Activated B cell treated with CpG ODN at 0.5 μM for 24 hours (primary cell): ENCODE measurements at regions of chr14 and their contacts with region 1.

Region 1: DNA sequence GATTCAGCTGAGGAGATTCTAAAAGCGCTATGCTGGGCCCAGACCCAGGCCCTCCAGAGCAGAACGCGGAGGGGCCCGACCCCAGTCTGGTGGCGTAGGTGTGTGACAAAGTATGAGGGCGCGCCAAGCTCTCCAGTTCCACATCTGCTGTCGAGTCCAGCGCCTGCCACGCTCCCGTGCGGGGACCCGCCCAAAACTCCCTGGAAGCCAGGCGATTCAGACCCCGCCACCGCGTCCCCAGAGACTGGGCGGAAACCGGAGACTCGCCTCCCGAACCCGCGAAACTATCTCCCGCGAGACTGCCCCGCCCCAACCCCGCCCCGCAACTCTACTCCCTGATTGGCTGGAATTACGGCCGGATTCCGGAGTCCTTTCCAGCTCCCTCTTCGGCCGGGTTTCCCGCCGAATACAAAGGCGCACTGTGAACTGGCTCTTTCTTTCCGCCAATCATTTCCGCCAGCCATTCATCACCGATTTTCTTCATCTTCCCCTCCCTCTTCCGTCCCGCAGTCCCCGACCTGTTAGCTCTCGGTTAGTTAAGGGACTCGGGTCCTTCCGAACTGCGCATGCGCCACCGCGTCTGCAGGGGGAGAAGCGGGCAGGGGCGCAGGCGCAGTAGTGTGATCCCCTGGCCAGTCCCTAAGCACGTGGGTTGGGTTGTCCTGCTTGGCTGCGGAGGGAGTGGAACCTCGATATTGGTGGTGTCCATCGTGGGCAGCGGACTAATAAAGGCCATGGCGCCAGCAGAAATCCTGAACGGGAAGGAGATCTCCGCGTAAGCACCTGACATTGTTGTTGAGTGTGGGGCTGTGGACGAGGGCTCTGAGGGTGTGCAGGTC is at the start of gene MTHFD1:
- DNase-seq: peak; percentile 93
- ATAC-seq: peak; percentile 79
- H3K4me3 Mint-ChIP-seq: peak within 1 kb of the TSS; percentile 94
- H3K27ac Mint-ChIP-seq: peak within 1 kb of the TSS; percentile 94
- H3K4me1 Mint-ChIP-seq: peaks cover 52% of the 10 kb centered on the region
- H3K27me3 Mint-ChIP-seq: no peaks in the 10 kb centered on the region
- CTCF ChIP-seq: no peak
- total RNA-seq, gene MTHFD1: 91.4 and 98.4 TPM in 2 replicates

Region 2: GRCh38 chr14:63632932-63633514 is 754.9 kb before region 1 on chr14:
- CTCF ChIA-PET with region 1: no interaction called
- POLR2A ChIA-PET with region 1: no interaction called
- intact Hi-C with region 1: no loop called
- DNase-seq: no peak
- ATAC-seq: peak; percentile 80
- H3K4me3 Mint-ChIP-seq: no peak overlapping the region
- H3K27ac Mint-ChIP-seq: no peak overlapping the region
- H3K4me1 Mint-ChIP-seq: peaks cover 20% of the 10 kb centered on the region
- H3K27me3 Mint-ChIP-seq: no peaks in the 10 kb centered on the region
- CTCF ChIP-seq: no peak

Region 3: DNA sequence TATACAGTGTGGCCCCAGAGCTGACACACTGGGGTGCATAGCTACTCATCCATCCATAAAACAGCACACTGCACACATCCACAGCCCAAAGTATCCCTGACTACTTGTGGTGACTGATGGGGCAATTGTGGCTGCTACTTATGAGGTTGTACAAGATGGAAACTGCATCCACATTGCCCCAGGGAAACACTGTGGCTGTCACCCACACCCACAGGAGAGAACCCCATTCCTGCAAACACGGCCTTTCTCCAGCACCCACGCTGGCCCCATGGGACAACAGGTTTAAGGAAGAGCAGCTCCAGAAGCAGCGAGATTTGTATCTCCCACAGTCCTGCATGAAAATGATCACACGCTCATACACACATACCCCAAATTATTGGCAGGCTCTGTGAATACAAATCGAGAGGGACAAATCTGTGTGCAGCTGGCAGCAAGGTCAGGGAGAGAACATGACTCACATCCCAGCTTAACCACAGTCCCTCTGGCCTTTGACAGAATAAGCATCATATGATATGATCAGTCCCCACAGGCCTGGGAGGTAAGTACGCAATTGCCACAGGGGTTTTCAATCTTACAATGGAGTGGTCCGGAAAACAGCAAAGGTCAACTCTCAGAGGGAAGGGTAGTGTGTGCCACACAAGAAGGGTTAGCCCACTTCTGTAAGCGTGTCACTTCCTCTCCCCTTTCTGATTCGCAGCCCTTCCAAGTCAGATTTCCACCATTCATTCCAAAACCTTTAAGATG is 155.6 kb before region 1 on chr14:
- CTCF ChIA-PET with region 1: no interaction called
- POLR2A ChIA-PET with region 1: interaction called, 4 read pairs
- intact Hi-C with region 1: loop called (anchors 5 kb)
- DNase-seq: no peak
- ATAC-seq: peak; percentile 11
- H3K4me3 Mint-ChIP-seq: peak overlapping the region; percentile 53
- H3K27ac Mint-ChIP-seq: peak overlapping the region; percentile 97
- H3K4me1 Mint-ChIP-seq: peaks cover 61% of the 10 kb centered on the region
- H3K27me3 Mint-ChIP-seq: no peaks in the 10 kb centered on the region
- CTCF ChIP-seq: no peak

Region 4: DNA sequence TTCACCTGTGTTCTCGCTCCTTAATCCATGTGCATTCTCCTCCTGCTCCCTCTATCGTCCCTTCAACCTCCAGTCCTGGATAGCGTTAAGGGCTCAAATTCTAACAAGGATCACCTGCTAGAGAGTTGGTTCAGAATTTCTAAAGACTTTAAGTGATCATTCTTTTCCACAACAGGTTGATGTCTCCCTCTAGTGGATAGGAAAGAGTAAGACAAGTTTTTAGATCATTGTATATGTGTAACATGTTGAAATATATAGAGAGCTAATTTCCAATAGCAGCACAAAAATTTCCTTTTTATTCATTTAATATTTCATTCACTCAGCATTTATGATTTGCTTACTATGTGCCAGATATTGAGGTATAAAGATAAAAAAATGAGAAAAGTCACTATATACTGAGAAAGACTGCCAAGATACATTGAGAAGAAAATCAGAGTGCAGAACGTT is 84.4 kb before region 1 on chr14:
- CTCF ChIA-PET with region 1: no interaction called
- POLR2A ChIA-PET with region 1: no interaction called
- intact Hi-C with region 1: no loop called
- DNase-seq: no peak
- ATAC-seq: peak; percentile 65
- H3K4me3 Mint-ChIP-seq: no peak overlapping the region
- H3K27ac Mint-ChIP-seq: no peak overlapping the region
- H3K4me1 Mint-ChIP-seq: peaks cover 2% of the 10 kb centered on the region
- H3K27me3 Mint-ChIP-seq: no peaks in the 10 kb centered on the region
- CTCF ChIP-seq: peak; percentile 93

Region 5: DNA sequence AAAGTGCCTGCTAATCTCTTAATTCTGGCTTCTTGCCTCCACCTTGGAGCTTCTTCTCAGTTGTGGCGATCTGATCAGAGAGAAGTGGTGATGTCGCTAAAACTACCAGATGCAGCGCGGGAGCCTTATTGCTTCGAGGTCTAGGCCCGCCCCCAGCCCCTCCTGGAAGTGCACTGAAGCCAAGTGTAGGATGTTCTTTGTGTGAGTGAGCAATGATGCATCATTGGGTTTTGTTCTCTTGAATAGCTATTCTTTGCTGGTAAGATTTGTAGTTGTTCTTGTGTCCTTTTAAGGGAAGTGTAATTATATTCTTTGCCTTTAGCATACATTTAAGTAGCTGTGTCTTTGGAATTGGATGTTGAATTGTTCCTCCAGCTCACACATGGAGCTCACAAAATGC is 36.1 kb after region 1 on chr14:
- CTCF ChIA-PET with region 1: no interaction called
- POLR2A ChIA-PET with region 1: no interaction called
- intact Hi-C with region 1: no loop called
- DNase-seq: no peak
- ATAC-seq: no peak
- H3K4me3 Mint-ChIP-seq: no peak overlapping the region
- H3K27ac Mint-ChIP-seq: no peak overlapping the region
- H3K4me1 Mint-ChIP-seq: no peaks in the 10 kb centered on the region
- H3K27me3 Mint-ChIP-seq: no peaks in the 10 kb centered on the region
- CTCF ChIP-seq: no peak

Region 6: DNA sequence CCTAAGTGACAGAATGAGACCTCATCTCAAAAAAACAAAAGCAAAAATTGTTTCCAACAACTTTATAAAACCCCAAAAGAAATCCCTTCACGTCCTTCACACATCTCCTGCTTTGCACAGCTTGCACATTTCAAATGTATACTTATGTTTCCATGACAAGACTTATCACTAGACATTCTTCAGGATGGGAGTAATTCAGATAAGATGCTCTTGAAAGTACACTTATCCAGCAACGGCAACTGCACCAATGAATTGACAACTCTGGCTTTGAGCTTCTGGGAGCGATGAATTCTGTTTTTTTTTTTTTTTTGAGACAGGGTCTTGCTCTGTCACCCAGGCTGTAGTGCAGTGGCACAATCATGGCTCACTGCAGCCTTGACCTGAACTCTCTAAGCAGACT is 46.6 kb after region 1 on chr14:
- CTCF ChIA-PET with region 1: interaction called, 14 read pairs
- POLR2A ChIA-PET with region 1: interaction called, 3 read pairs
- intact Hi-C with region 1: no loop called
- DNase-seq: no peak
- ATAC-seq: no peak
- H3K4me3 Mint-ChIP-seq: no peak overlapping the region
- H3K27ac Mint-ChIP-seq: no peak overlapping the region
- H3K4me1 Mint-ChIP-seq: no peaks in the 10 kb centered on the region
- H3K27me3 Mint-ChIP-seq: no peaks in the 10 kb centered on the region
- CTCF ChIP-seq: no peak

Region 7: DNA sequence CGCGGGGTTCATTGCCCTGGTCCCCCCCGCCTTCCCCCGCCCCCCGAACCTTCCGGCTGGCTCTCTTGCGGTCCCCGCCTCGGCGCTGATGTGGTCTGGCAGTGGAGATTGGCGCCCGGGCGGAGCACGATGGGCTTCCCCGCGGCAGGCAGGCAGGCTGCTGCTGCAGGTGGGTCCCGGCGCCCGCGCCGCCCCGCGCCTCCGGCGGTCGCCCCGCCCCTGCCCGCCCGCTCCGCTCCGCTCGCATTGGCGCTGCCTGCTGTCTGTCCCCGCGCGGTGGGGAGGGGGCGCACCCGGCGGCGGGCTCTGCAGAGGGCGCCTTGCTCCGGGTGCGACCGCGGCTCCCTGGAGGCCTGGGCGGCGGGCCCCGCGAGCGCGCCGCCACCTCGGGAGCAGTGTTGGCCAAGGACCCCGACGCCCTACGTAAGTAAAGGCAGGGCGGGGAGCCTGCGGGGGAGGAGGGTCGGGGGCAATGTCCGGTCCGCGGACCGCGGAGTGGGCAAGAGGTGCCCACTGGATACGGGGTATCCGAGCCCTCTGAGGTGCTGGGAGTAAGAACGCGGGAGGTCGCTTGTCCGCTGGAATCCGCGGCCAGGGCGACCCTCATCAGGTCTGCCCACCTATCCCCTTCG is 77.4 kb after region 1 on chr14 and contains the start of gene AKAP5:
- CTCF ChIA-PET with region 1: no interaction called
- POLR2A ChIA-PET with region 1: interaction called, 8 read pairs
- intact Hi-C with region 1: loop called (anchors 5 kb)
- DNase-seq: peak; percentile 67
- ATAC-seq: peak; percentile 91
- H3K4me3 Mint-ChIP-seq: peak within 1 kb of the TSS; percentile 86
- H3K27ac Mint-ChIP-seq: peak within 1 kb of the TSS; percentile 80
- H3K4me1 Mint-ChIP-seq: peaks cover 51% of the 10 kb centered on the region
- H3K27me3 Mint-ChIP-seq: no peaks in the 10 kb centered on the region
- CTCF ChIP-seq: no peak
- total RNA-seq, gene AKAP5: 4.3 and 5.1 TPM in 2 replicates

Region 8: DNA sequence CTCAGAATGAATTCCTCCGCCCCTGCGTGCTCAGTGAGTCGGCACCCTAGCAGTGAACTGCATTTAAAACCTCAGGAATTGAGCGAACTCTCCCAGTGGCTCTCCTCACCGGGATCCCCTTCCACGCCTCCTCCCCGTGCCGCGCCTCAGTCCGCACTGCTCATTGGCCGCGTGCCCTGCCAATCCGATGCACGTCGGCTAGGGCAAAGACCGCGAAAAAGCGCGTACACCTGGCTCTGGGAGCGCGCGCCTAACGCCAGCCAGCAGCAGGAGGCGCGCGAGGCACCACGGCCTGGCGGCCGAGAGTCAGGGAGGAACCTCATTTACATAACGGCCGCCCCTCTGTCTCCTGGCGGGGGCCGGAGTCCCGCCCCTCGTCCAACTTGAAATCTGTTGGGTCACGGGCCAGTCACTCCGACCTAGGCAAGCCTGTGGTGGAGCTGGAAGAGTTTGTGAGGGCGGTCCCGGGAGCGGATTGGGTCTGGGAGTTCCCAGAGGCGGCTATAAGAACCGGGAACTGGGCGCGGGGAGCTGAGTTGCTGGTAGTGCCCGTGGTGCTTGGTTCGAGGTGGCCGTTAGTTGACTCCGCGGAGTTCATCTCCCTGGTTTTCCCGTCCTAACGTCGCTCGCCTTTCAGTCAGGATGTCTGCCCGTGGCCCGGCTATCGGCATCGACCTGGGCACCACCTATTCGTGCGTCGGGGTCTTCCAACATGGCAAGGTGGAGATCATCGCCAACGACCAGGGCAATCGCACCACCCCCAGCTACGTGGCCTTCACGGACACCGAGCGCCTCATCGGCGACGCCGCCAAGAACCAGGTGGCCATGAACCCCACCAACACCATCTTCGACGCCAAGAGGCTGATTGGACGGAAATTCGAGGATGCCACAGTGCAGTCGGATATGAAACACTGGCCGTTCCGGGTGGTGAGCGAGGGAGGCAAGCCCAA is 152.6 kb after region 1 on chr14 and contains the start of gene HSPA2:
- CTCF ChIA-PET with region 1: no interaction called
- POLR2A ChIA-PET with region 1: interaction called, 9 read pairs
- intact Hi-C with region 1: loop called (anchors 1 kb)
- DNase-seq: peak; percentile 93
- ATAC-seq: peak; percentile 90
- H3K4me3 Mint-ChIP-seq: peak within 1 kb of the TSS; percentile 100
- H3K27ac Mint-ChIP-seq: peak within 1 kb of the TSS; percentile 96
- H3K4me1 Mint-ChIP-seq: peaks cover 33% of the 10 kb centered on the region
- H3K27me3 Mint-ChIP-seq: peaks cover 2% of the 10 kb centered on the region
- CTCF ChIP-seq: no peak
- total RNA-seq, gene HSPA2: 3.8 and 5.4 TPM in 2 replicates

Region 9: GRCh38 chr14:65847075-65847847 is 1459.3 kb after region 1 on chr14:
- CTCF ChIA-PET with region 1: no interaction called
- POLR2A ChIA-PET with region 1: no interaction called
- intact Hi-C with region 1: no loop called
- DNase-seq: no peak
- ATAC-seq: peak; percentile 50
- H3K4me3 Mint-ChIP-seq: no peak overlapping the region
- H3K27ac Mint-ChIP-seq: peak overlapping the region; percentile 0
- H3K4me1 Mint-ChIP-seq: peaks cover 13% of the 10 kb centered on the region
- H3K27me3 Mint-ChIP-seq: peaks cover 2% of the 10 kb centered on the region
- CTCF ChIP-seq: no peak